ENCODE measurements at regions of chr6 and their contacts with region 1.

Region 1: GRCh38 chr6:21769405-21769861 is 175.9 kb downstream of the SOX4 start:
- DNase-seq: peak; percentile 94
- H3K4me3 ChIP-seq: no peak overlapping the region
- H3K27ac ChIP-seq: peak overlapping the region; percentile 98
- H3K4me1 ChIP-seq: peaks cover 53% of the 10 kb centered on the region
- H3K27me3 ChIP-seq: no peaks in the 10 kb centered on the region
- CTCF ChIP-seq: no peak
- POLR2A ChIP-seq: no peak

Region 2: DNA sequence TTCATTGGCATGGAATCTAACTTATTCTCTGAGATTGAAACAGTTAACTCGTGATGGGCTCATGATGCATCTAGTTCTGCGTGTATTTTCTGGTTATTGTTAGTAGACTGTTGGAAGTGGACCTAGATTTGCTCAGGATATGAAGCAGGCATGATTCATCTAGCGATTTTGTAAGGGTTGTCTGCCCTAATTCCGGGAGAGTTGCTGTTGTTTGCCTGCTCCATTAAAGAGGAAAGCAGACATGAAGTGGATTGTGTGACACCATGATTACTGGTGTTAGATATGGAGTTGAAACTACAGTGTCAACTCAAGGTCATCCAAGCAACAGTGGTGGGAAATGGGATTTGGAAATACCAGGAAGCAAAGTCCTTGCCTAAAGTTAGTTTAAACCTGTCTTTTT is 134.9 kb before region 1 on chr6:
- CTCF ChIA-PET with region 1: no interaction called
- POLR2A ChIA-PET with region 1: interaction called, 5 read pairs
- dilution Hi-C with region 1: no loop called
- intact Hi-C with region 1: loop called (anchors 1 kb)
- DNase-seq: peak; percentile 97
- H3K4me3 ChIP-seq: no peak overlapping the region
- H3K27ac ChIP-seq: peak overlapping the region; percentile 67
- H3K4me1 ChIP-seq: peaks cover 16% of the 10 kb centered on the region
- H3K27me3 ChIP-seq: no peaks in the 10 kb centered on the region
- CTCF ChIP-seq: no peak
- POLR2A ChIP-seq: no peak

Region 3: DNA sequence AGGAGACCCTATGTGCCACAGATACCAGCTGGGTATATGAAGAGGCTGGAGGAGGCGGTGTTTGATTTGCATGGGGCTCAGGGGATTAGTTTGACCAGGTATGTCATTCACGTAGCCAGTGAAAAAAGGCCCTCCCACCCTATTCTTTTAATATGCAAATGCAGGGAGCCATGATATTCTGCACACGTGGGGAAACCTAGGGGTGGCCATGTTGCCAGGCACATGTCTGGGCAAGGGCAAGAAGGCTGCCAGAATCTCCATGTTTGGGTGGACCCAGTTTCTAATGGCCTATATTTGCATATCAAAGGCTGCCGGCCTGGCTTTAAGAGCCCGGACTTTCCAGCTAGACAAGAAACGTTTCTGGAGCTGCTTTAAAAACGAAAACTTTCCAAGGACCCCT is 115.5 kb before region 1 on chr6:
- CTCF ChIA-PET with region 1: no interaction called
- POLR2A ChIA-PET with region 1: no interaction called
- dilution Hi-C with region 1: no loop called
- intact Hi-C with region 1: no loop called
- DNase-seq: no peak
- H3K4me3 ChIP-seq: no peak overlapping the region
- H3K27ac ChIP-seq: no peak overlapping the region
- H3K4me1 ChIP-seq: no peaks in the 10 kb centered on the region
- H3K27me3 ChIP-seq: no peaks in the 10 kb centered on the region
- CTCF ChIP-seq: no peak
- POLR2A ChIP-seq: no peak

Region 4: GRCh38 chr6:21679761-21680265 is 89.6 kb before region 1 on chr6:
- CTCF ChIA-PET with region 1: no interaction called
- POLR2A ChIA-PET with region 1: no interaction called
- dilution Hi-C with region 1: no loop called
- intact Hi-C with region 1: no loop called
- DNase-seq: no peak
- H3K4me3 ChIP-seq: no peak overlapping the region
- H3K27ac ChIP-seq: no peak overlapping the region
- H3K4me1 ChIP-seq: peaks cover 11% of the 10 kb centered on the region
- H3K27me3 ChIP-seq: no peaks in the 10 kb centered on the region
- CTCF ChIP-seq: no peak
- POLR2A ChIP-seq: no peak

Region 5: GRCh38 chr6:21754891-21755290 is 14.5 kb before region 1 on chr6:
- CTCF ChIA-PET with region 1: interaction called, 5 read pairs
- POLR2A ChIA-PET with region 1: no interaction called
- dilution Hi-C with region 1: no loop called
- intact Hi-C with region 1: loop called (anchors 1 kb)
- DNase-seq: peak; percentile 31
- H3K4me3 ChIP-seq: no peak overlapping the region
- H3K27ac ChIP-seq: peak overlapping the region; percentile 64
- H3K4me1 ChIP-seq: peaks cover 48% of the 10 kb centered on the region
- H3K27me3 ChIP-seq: no peaks in the 10 kb centered on the region
- CTCF ChIP-seq: no peak
- POLR2A ChIP-seq: no peak

Region 6: GRCh38 chr6:21885532-21886114 is 116.2 kb after region 1 on chr6:
- CTCF ChIA-PET with region 1: no interaction called
- POLR2A ChIA-PET with region 1: no interaction called
- dilution Hi-C with region 1: no loop called
- intact Hi-C with region 1: loop called (anchors 1 kb)
- DNase-seq: peak; percentile 93
- H3K4me3 ChIP-seq: no peak overlapping the region
- H3K27ac ChIP-seq: peak overlapping the region; percentile 85
- H3K4me1 ChIP-seq: peaks cover 37% of the 10 kb centered on the region
- H3K27me3 ChIP-seq: no peaks in the 10 kb centered on the region
- CTCF ChIP-seq: no peak
- POLR2A ChIP-seq: no peak

Region 7: DNA sequence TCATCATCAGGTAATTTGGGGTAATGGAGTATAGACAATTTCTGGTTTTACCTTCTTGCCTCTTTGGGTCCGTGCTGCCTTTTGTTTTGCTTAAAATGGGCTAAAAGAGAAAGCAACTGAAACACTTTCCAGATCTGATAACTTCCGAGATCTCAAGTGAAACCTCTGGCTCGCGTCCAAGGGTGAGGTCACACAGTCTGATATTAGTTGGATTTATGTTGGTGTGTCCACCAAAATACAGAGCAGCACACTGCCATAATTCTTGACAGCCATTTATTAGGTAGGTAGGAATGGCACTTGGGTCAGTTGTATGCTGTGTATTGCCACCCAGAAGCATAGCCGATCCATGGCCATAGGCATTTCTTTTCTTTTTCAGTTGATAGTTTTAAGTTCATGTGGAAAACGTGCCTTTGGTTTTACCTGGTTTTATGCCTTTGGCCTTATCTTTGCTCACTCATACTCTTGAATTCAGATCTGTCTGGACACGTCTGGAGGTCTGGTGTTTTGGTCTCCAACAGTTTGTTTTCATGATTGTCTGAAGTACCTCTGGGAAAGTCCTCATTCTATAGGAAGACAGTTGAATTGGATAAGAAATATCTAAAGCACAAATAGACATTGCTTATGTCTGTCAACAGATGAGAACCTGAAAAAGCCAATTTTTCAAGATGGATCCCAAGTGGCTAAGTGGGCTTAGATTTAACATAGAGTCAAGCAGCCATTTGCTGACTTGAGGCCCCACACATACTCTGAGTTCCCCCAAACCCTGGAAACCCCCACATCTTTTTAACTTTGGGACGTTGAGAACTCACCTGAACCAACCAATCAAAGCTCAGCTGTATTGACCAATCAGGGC is 144.9 kb after region 1 on chr6:
- CTCF ChIA-PET with region 1: no interaction called
- POLR2A ChIA-PET with region 1: no interaction called
- dilution Hi-C with region 1: no loop called
- intact Hi-C with region 1: no loop called
- DNase-seq: peak; percentile 84
- H3K4me3 ChIP-seq: peak overlapping the region in 1 of 3 experiments; percentile 43
- H3K27ac ChIP-seq: peak overlapping the region; percentile 34
- H3K4me1 ChIP-seq: peaks cover 13% of the 10 kb centered on the region
- H3K27me3 ChIP-seq: no peaks in the 10 kb centered on the region
- CTCF ChIP-seq: no peak
- POLR2A ChIP-seq: no peak

Region 8: GRCh38 chr6:21987501-21987957 is 218.1 kb after region 1 on chr6:
- CTCF ChIA-PET with region 1: no interaction called
- POLR2A ChIA-PET with region 1: no interaction called
- dilution Hi-C with region 1: no loop called
- intact Hi-C with region 1: loop called (anchors 1 kb)
- DNase-seq: peak; percentile 96
- H3K4me3 ChIP-seq: peak overlapping the region in 1 of 3 experiments; percentile 26
- H3K27ac ChIP-seq: peak overlapping the region; percentile 88
- H3K4me1 ChIP-seq: peaks cover 33% of the 10 kb centered on the region
- H3K27me3 ChIP-seq: no peaks in the 10 kb centered on the region
- CTCF ChIP-seq: no peak
- POLR2A ChIP-seq: peak; percentile 21

Region 9: GRCh38 chr6:22328474-22328873 is 559.0 kb after region 1 on chr6:
- CTCF ChIA-PET with region 1: no interaction called
- POLR2A ChIA-PET with region 1: no interaction called
- dilution Hi-C with region 1: no loop called
- intact Hi-C with region 1: no loop called
- DNase-seq: no peak
- H3K4me3 ChIP-seq: no peak overlapping the region
- H3K27ac ChIP-seq: no peak overlapping the region
- H3K4me1 ChIP-seq: no peaks in the 10 kb centered on the region
- H3K27me3 ChIP-seq: no peaks in the 10 kb centered on the region
- CTCF ChIP-seq: no peak
- POLR2A ChIP-seq: no peak

Region 10: GRCh38 chr6:22880686-22881433 is 1111.4 kb after region 1 on chr6:
- CTCF ChIA-PET with region 1: no interaction called
- POLR2A ChIA-PET with region 1: no interaction called
- dilution Hi-C with region 1: no loop called
- intact Hi-C with region 1: loop called (anchors 5 kb)
- DNase-seq: peak; percentile 92
- H3K4me3 ChIP-seq: no peak overlapping the region
- H3K27ac ChIP-seq: peak overlapping the region; percentile 80
- H3K4me1 ChIP-seq: peaks cover 53% of the 10 kb centered on the region
- H3K27me3 ChIP-seq: no peaks in the 10 kb centered on the region
- CTCF ChIP-seq: no peak
- POLR2A ChIP-seq: no peak

Measured in endothelial cell of umbilical vein (primary cell).